Naive thymus-derived CD4-positive, alpha-beta T cell (primary cell): ENCODE measurements at regions of chr7 and their contacts with region 1.

Region 1: DNA sequence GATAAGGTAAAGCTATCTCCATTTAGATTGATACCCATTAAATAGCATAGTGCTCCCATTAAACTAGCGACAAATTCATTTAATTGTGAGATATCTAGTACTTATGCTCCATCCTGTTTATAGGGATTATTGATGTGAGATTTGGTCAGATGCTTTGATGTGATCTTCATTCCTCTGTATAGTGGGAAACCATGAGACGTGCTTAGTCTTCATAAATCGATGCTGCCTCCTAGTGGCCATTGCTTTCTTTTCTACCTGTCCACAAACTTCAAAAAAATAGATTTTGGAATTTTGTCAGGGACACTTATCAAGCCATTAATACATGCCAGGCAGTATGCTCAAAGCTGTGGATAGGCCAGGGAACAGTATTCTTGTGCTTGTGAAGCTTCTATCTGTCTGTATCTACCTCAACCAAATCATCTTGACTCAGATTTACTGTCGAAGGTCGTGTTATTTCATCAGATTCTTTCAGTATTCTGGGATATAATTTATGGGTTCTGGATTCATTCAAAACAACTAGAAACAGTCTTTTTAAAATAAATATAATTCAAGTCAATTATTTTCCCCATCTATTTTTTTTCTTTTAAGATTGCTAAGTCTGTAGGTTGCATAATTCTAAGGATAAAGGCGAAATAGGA is 12.0 kb downstream of the LSM8 start:
- DNase-seq: peak in 8 of 9 donors; percentile 14 to 56 (median 43)
- ATAC-seq: peak; percentile 86
- H3K4me3 ChIP-seq: no peak overlapping the region
- H3K4me3 Mint-ChIP-seq: no peak overlapping the region
- H3K27ac ChIP-seq: no peak overlapping the region
- H3K27ac Mint-ChIP-seq: peak overlapping the region in 6 of 9 donors; percentile 1 to 81 (median 40)
- H3K4me1 ChIP-seq: no peaks in the 10 kb centered on the region
- H3K4me1 Mint-ChIP-seq: peaks cover 0 to 12% (median 5%) of the 10 kb centered on the region in 7 donors
- H3K27me3 ChIP-seq: no peaks in the 10 kb centered on the region
- H3K27me3 Mint-ChIP-seq: no peaks in the 10 kb centered on the region

Region 2: GRCh38 chr7:117458977-117459583 is 736.9 kb before region 1 on chr7:
- CTCF ChIA-PET with region 1: no interaction called
- POLR2A ChIA-PET with region 1: no interaction called
- intact Hi-C with region 1: loop called in 1 of 2 experiments (anchors 2 kb)
- DNase-seq: no peak
- ATAC-seq: no peak
- H3K4me3 ChIP-seq: no peak overlapping the region
- H3K4me3 Mint-ChIP-seq: no peak overlapping the region
- H3K27ac ChIP-seq: no peak overlapping the region
- H3K27ac Mint-ChIP-seq: no peak overlapping the region
- H3K4me1 ChIP-seq: no peaks in the 10 kb centered on the region
- H3K4me1 Mint-ChIP-seq: no peaks in the 10 kb centered on the region
- H3K27me3 ChIP-seq: no peaks in the 10 kb centered on the region
- H3K27me3 Mint-ChIP-seq: no peaks in the 10 kb centered on the region

Region 3: GRCh38 chr7:117750612-117751563 is 445.1 kb before region 1 on chr7:
- CTCF ChIA-PET with region 1: no interaction called
- POLR2A ChIA-PET with region 1: no interaction called
- intact Hi-C with region 1: loop called in 1 of 2 experiments (anchors 2 kb)
- DNase-seq: no peak
- ATAC-seq: no peak
- H3K4me3 ChIP-seq: no peak overlapping the region
- H3K4me3 Mint-ChIP-seq: no peak overlapping the region
- H3K27ac ChIP-seq: no peak overlapping the region
- H3K27ac Mint-ChIP-seq: no peak overlapping the region
- H3K4me1 ChIP-seq: no peaks in the 10 kb centered on the region
- H3K4me1 Mint-ChIP-seq: no peaks in the 10 kb centered on the region
- H3K27me3 ChIP-seq: no peaks in the 10 kb centered on the region
- H3K27me3 Mint-ChIP-seq: peaks cover 0 to 5% (median 3%) of the 10 kb centered on the region in 5 donors

Region 4: GRCh38 chr7:118609207-118609606 is 413.3 kb after region 1 on chr7:
- CTCF ChIA-PET with region 1: no interaction called
- POLR2A ChIA-PET with region 1: no interaction called
- intact Hi-C with region 1: no loop called
- DNase-seq: no peak
- ATAC-seq: no peak
- H3K4me3 ChIP-seq: no peak overlapping the region
- H3K4me3 Mint-ChIP-seq: no peak overlapping the region
- H3K27ac ChIP-seq: no peak overlapping the region
- H3K27ac Mint-ChIP-seq: no peak overlapping the region
- H3K4me1 ChIP-seq: no peaks in the 10 kb centered on the region
- H3K4me1 Mint-ChIP-seq: no peaks in the 10 kb centered on the region
- H3K27me3 ChIP-seq: no peaks in the 10 kb centered on the region
- H3K27me3 Mint-ChIP-seq: no peaks in the 10 kb centered on the region